PC-9 (cell line): ENCODE measurements at regions of chr5 and their contacts with region 1.

Region 1: GRCh38 chr5:16471387-16471786 is 5.8 kb upstream of the ZNF622 start:
- DNase-seq: no peak
- H3K4me3 ChIP-seq: no peak overlapping the region
- H3K27ac ChIP-seq: no peak overlapping the region
- H3K4me1 ChIP-seq: peaks cover 17% of the 10 kb centered on the region
- H3K27me3 ChIP-seq: no peaks in the 10 kb centered on the region
- CTCF ChIP-seq: no peak

Region 2: DNA sequence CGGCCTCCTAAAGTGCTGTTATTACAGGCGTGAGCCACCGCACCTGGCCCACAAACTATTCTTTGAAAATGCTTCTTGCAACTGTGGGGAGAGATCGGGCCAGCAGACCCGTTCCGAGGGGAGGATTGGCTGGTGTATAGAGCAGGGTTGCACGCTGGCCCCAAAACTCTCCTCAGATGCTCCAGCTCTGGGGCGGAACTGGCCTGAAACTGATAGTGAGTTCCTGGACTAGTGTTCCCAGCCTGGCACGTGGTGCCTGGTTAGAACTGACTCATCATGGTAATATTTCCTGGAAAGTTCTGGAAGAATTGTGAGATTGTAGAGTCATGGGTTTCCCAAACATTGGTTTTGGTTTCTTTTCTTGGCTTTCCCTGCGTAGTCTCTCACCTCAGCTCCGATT is 850.9 kb before region 1 on chr5:
- CTCF ChIA-PET with region 1: no interaction called
- POLR2A ChIA-PET with region 1: no interaction called
- intact Hi-C with region 1: no loop called
- DNase-seq: no peak
- H3K4me3 ChIP-seq: no peak overlapping the region
- H3K27ac ChIP-seq: no peak overlapping the region
- H3K4me1 ChIP-seq: no peaks in the 10 kb centered on the region
- H3K27me3 ChIP-seq: peaks cover 5% of the 10 kb centered on the region; the same call in 1 of the 2 replicates
- CTCF ChIP-seq: no peak

Region 3: GRCh38 chr5:16642862-16643261 is 171.5 kb after region 1 on chr5:
- CTCF ChIA-PET with region 1: no interaction called
- POLR2A ChIA-PET with region 1: no interaction called
- intact Hi-C with region 1: no loop called
- DNase-seq: no peak
- H3K4me3 ChIP-seq: no peak overlapping the region
- H3K27ac ChIP-seq: no peak overlapping the region
- H3K4me1 ChIP-seq: no peaks in the 10 kb centered on the region
- H3K27me3 ChIP-seq: peaks cover 65% of the 10 kb centered on the region
- CTCF ChIP-seq: no peak

Region 4: GRCh38 chr5:16666883-16667398 is 195.6 kb after region 1 on chr5:
- CTCF ChIA-PET with region 1: no interaction called
- POLR2A ChIA-PET with region 1: no interaction called
- intact Hi-C with region 1: loop called (anchors 5 kb)
- DNase-seq: peak in 1 of 2 experiments; percentile 41
- H3K4me3 ChIP-seq: no peak overlapping the region
- H3K27ac ChIP-seq: no peak overlapping the region
- H3K4me1 ChIP-seq: no peaks in the 10 kb centered on the region
- H3K27me3 ChIP-seq: no peaks in the 10 kb centered on the region
- CTCF ChIP-seq: peak; percentile 62